ENCODE measurements at regions of chr19 and their contacts with region 1.

Region 1: DNA sequence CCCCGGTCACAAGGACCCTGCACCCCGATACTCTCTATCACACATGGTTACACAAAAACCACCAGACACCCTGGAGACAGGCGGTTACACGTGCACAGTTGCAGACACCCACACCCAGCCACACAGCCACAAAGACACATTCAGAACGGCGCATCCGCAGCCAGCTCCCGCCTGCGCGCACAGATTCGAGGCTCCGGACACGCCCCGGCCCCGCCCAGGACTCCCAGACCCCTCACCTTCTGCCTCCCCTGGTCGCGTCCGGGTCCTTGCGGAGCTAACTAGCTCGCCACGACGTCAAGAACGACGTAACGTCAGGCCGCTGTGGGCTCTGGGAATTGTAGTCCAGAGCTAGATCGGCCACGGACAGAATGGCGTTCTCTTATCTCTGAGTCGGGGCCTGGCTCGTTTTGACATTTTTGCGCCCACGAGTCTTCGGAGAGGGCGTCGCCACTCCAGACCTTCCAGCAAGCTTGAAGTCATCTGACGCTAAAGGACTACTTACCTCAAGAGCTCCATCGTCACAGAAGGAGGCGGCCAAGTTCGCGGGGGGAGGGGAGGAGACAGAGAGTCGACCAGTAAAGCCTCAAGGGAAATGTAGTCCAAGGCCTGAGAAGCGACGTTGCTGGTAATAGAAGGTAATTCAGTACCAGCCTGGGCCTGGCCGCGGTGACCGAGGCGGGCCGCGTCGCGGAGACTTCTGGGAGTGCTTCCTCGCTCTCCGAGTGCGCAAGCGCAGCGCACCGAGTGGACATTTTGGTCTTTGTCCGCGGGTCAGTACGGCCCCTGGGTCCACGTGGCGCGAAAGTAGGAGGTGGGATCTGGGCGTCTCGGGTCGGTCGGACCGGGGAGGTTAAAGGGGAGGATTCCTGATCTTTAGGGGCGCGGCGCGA is at the starts of genes ZNF146 and ZNF565:
- DNase-seq: peak; percentile 87 to 97 (median 96)
- ATAC-seq: peak; percentile 94
- H3K4me3 ChIP-seq: peak within 1 kb of the TSS; percentile 97
- H3K4me3 Mint-ChIP-seq: no peak within 1 kb of the TSS
- H3K27ac ChIP-seq: peak within 1 kb of the TSS; percentile 94
- H3K27ac Mint-ChIP-seq: peak within 1 kb of the TSS in 2 of 9 donors; percentile 38 to 41
- H3K4me1 ChIP-seq: peaks cover 14 to 19% of the 10 kb centered on the region in 2 donors
- H3K4me1 Mint-ChIP-seq: peaks cover 13 to 28% (median 25%) of the 10 kb centered on the region in 7 donors
- H3K27me3 ChIP-seq: no peaks in the 10 kb centered on the region
- H3K27me3 Mint-ChIP-seq: no peaks in the 10 kb centered on the region
- total RNA-seq, gene ZNF146: 27.7 to 77.4 (median 57.7) TPM
- total RNA-seq, gene ZNF565: 2.7 to 11.6 (median 7.8) TPM

Region 2: DNA sequence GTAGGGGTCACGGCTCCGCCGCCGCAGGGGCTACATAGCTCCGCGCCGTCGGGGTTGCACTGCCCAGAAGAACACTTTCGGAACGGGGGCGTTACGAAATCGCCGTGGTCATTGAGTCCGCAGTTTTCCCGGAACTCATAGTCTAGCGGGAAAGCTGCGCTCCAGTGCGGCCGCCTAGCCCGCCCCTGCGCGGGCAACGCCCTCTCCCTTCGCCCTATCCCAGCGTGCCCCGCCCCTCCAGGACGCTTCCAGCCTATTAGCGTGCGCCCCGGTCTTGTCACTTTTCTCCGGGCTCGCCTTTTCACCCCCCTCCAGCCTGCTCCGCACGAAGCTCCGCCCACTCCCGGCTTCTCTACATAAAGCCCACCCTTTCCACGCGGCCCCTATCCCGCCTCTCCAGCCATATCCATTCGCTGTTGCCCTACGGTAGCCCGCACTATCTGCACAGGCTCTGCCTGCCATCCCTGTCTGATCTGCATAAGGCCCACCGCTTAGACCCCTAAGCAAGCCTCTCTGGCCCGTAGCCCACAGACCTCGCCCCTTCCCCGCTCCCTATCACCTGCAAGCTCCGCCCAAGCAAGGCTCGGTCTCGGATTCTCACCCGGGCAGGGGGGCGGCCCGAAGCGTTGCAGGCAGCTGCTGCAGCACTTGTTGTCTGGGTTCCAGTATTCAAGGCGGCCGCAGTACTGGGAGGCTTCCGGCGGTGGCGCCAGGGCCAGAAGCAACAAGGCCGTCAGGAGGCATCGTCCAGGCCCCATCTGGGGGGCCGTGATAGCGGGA is 474.0 kb before region 1 on chr19:
- CTCF ChIA-PET with region 1: no interaction called
- POLR2A ChIA-PET with region 1: no interaction called
- intact Hi-C with region 1: loop called in 1 of 2 experiments (anchors 10 kb)
- DNase-seq: peak; percentile 81 to 95 (median 92)
- ATAC-seq: peak; percentile 78
- H3K4me3 ChIP-seq: peak overlapping the region; percentile 89
- H3K4me3 Mint-ChIP-seq: peak overlapping the region; percentile 87 to 100 (median 92)
- H3K27ac ChIP-seq: peak overlapping the region; percentile 91
- H3K27ac Mint-ChIP-seq: peak overlapping the region; percentile 85 to 99 (median 96)
- H3K4me1 ChIP-seq: peaks cover 27% of the 10 kb centered on the region in 2 donors
- H3K4me1 Mint-ChIP-seq: peaks cover 25 to 67% (median 48%) of the 10 kb centered on the region in 7 donors
- H3K27me3 ChIP-seq: no peaks in the 10 kb centered on the region
- H3K27me3 Mint-ChIP-seq: peaks cover 0 to 2% (median 0%) of the 10 kb centered on the region in 5 donors

Region 3: DNA sequence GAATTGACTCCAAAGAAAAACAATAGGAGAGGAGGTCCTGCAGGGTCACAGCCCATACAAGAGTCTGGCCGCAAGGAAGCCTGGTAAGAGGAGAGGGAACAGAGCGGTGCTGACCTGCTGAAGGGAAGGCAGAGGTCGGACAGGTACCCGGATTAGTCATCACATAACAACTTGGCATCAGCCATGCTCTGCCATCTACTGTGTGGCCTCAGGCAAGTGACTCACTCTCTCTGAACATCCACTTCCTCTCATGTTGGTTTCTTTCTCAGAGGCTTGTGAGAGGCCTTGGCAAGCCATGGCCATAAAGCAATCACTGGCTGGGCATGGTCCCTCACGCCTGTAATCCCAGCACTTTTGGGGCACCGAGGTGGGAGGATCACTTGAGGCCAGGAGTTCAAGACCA is 82.1 kb before region 1 on chr19:
- CTCF ChIA-PET with region 1: interaction called, 4 read pairs
- POLR2A ChIA-PET with region 1: interaction called, 5 read pairs
- intact Hi-C with region 1: loop called (anchors 1 kb)
- DNase-seq: no peak
- ATAC-seq: peak; percentile 50
- H3K4me3 ChIP-seq: no peak overlapping the region
- H3K4me3 Mint-ChIP-seq: peak overlapping the region in 2 of 10 donors; percentile 12 to 29
- H3K27ac ChIP-seq: no peak overlapping the region
- H3K27ac Mint-ChIP-seq: peak overlapping the region in 1 of 9 donors; percentile 80
- H3K4me1 ChIP-seq: no peaks in the 10 kb centered on the region
- H3K4me1 Mint-ChIP-seq: peaks cover 0 to 34% (median 5%) of the 10 kb centered on the region in 7 donors
- H3K27me3 ChIP-seq: no peaks in the 10 kb centered on the region
- H3K27me3 Mint-ChIP-seq: no peaks in the 10 kb centered on the region

Region 4: GRCh38 chr19:36528194-36528920 is 313.7 kb after region 1 on chr19 and contains the start of gene ZNF260:
- CTCF ChIA-PET with region 1: no interaction called
- POLR2A ChIA-PET with region 1: interaction called, 8 read pairs
- intact Hi-C with region 1: loop called (anchors 1 kb)
- DNase-seq: peak; percentile 81 to 94 (median 90)
- ATAC-seq: peak; percentile 95
- H3K4me3 ChIP-seq: peak within 1 kb of the TSS; percentile 91
- H3K4me3 Mint-ChIP-seq: peak within 1 kb of the TSS; percentile 88 to 100 (median 98)
- H3K27ac ChIP-seq: peak within 1 kb of the TSS; percentile 83
- H3K27ac Mint-ChIP-seq: peak within 1 kb of the TSS; percentile 84 to 99 (median 96)
- H3K4me1 ChIP-seq: peaks cover 4 to 11% of the 10 kb centered on the region in 2 donors
- H3K4me1 Mint-ChIP-seq: peaks cover 15 to 31% (median 23%) of the 10 kb centered on the region in 7 donors
- H3K27me3 ChIP-seq: no peaks in the 10 kb centered on the region
- H3K27me3 Mint-ChIP-seq: no peaks in the 10 kb centered on the region
- total RNA-seq, gene ZNF260: 2.9 to 13.2 (median 11.3) TPM

Region 5: DNA sequence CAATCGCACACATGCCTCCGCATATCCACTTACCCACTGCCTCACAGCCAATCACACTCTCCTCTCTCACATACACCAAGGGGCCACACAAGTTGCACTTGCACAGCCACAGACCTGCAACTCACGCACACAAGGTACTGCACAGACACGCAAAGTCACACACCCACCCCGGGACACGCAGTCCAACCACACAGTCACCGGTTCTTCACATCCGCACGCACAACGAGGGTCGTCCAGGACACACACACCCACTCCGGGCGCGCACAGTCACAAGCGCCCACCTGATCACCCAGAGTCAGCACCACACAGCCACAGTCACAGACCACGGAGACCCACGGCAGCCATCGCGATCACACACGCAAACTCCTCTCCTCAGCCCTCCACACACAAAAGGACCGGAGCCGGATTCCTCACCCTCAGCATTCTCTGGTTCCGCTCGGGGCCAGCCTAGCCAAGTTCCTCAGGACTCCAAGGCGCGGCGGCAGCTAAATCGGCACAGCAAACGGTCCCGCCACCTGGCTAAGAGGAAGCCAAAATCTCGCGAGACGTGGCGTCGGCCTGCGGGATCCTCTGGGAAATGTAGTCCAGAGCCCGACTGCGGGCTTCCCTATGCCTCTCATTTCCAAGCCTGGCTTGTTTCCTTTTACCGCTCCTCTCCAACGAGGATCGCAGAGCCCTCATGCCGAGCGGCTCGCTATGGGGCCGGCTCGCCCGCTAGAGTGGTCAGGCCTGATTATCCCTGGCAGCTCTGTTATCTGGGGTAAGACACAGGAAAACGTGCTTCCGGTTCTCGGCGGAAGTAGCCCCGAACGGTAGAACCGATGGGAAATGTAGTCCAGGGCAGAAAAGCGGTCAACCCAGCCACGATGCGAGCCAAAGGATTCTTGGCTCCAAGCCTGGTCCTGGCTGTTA is 557.9 kb after region 1 on chr19 and contains the start of gene ZNF850:
- CTCF ChIA-PET with region 1: no interaction called
- POLR2A ChIA-PET with region 1: no interaction called
- intact Hi-C with region 1: loop called (anchors 1 kb)
- DNase-seq: peak; percentile 88 to 97 (median 94)
- ATAC-seq: peak; percentile 94
- H3K4me3 ChIP-seq: peak within 1 kb of the TSS; percentile 97
- H3K4me3 Mint-ChIP-seq: peak within 1 kb of the TSS; percentile 88 to 98 (median 96)
- H3K27ac ChIP-seq: peak within 1 kb of the TSS; percentile 87
- H3K27ac Mint-ChIP-seq: peak within 1 kb of the TSS; percentile 82 to 98 (median 92)
- H3K4me1 ChIP-seq: peaks cover 12 to 15% of the 10 kb centered on the region in 2 donors
- H3K4me1 Mint-ChIP-seq: peaks cover 21 to 26% (median 24%) of the 10 kb centered on the region in 7 donors
- H3K27me3 ChIP-seq: no peaks in the 10 kb centered on the region
- H3K27me3 Mint-ChIP-seq: no peaks in the 10 kb centered on the region
- total RNA-seq, gene ZNF850: 1.9 to 4.8 (median 4.3) TPM

Region 6: DNA sequence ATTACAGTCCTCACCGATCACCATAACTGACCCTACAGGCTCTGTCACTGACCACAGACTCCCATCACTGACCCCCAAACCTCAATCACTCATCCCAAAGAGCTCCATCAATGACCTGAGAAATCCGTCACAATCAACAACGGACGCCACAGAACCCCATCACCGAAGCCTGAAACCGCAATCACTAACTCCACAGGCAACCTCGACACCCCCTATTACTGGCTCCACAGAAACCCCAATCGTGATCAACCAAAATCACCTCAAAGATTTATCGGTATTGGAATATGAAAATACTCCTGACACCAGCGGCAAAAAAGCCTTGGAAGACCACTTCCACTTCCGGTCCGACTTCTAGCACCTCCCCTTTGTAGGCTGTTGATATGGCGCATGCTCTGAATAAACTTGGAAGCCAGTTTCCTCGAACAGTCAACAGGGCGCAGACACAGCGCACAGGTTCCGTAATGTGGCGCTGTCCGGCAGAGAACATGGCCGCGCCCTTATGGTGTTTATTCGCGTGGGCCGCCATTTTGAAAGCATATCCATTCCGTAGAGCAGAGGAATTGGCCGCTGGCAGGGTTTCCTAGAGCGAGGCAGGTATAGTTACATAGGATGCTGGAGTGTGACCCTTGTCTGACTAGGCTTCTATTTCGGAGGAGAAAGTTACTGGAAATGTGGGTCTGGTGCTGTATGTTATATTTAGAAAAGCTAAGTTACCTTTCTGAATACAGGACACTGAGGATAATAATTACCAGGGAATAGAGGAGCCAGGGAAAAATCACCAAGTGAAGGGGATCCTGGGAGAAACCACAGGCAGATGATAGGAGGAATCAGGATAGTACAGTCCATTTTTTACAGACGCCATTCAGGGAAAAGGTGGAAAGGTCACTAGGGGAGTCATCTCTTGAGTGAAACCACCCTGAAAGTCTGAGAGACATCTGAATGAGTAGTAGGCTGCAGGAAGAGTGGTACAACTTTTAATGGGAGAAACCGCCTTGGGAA is 958.0 kb after region 1 on chr19 and contains the start of gene ZNF585A:
- CTCF ChIA-PET with region 1: no interaction called
- POLR2A ChIA-PET with region 1: no interaction called
- intact Hi-C with region 1: loop called in 1 of 2 experiments (anchors 1 kb)
- DNase-seq: peak; percentile 68 to 92 (median 88)
- ATAC-seq: peak; percentile 100
- H3K4me3 ChIP-seq: peak within 1 kb of the TSS; percentile 90
- H3K4me3 Mint-ChIP-seq: peak within 1 kb of the TSS in 3 of 10 donors; percentile 36 to 73 (median 39)
- H3K27ac ChIP-seq: peak within 1 kb of the TSS; percentile 84
- H3K27ac Mint-ChIP-seq: no peak within 1 kb of the TSS
- H3K4me1 ChIP-seq: no peaks in the 10 kb centered on the region
- H3K4me1 Mint-ChIP-seq: peaks cover 0 to 16% (median 4%) of the 10 kb centered on the region in 7 donors
- H3K27me3 ChIP-seq: no peaks in the 10 kb centered on the region
- H3K27me3 Mint-ChIP-seq: no peaks in the 10 kb centered on the region
- total RNA-seq, gene ZNF585A: 3.5 to 24.3 (median 7.2) TPM